Motor neuron (in vitro differentiated cells): ENCODE measurements at regions of chr13 and their contacts with region 1.

Region 1: GRCh38 chr13:33542283-33543088 is 256.9 kb upstream of the STARD13 start:
- ATAC-seq: peak; percentile 88 to 95 (median 92)
- H3K4me3 ChIP-seq: peak overlapping the region; percentile 43 to 52 (median 46)
- H3K27ac ChIP-seq: peak overlapping the region; percentile 90 to 91
- H3K4me1 ChIP-seq: peaks cover 21 to 22% of the 10 kb centered on the region in 2 donors

Region 2: GRCh38 chr13:32586080-32586900 is 956.2 kb before region 1 on chr13 and contains the start of gene PDS5B:
- in situ Hi-C with region 1: loop called in 2 of 9 experiments (anchors 25 kb)
- ATAC-seq: peak; percentile 79 to 93 (median 90)
- H3K4me3 ChIP-seq: peak within 1 kb of the TSS; percentile 69 to 82 (median 74)
- H3K27ac ChIP-seq: peak within 1 kb of the TSS; percentile 86 to 91
- H3K4me1 ChIP-seq: peaks cover 6 to 15% of the 10 kb centered on the region in 2 donors
- total RNA-seq, gene PDS5B: 30.4 to 79.0 (median 43.5) TPM

Region 3: DNA sequence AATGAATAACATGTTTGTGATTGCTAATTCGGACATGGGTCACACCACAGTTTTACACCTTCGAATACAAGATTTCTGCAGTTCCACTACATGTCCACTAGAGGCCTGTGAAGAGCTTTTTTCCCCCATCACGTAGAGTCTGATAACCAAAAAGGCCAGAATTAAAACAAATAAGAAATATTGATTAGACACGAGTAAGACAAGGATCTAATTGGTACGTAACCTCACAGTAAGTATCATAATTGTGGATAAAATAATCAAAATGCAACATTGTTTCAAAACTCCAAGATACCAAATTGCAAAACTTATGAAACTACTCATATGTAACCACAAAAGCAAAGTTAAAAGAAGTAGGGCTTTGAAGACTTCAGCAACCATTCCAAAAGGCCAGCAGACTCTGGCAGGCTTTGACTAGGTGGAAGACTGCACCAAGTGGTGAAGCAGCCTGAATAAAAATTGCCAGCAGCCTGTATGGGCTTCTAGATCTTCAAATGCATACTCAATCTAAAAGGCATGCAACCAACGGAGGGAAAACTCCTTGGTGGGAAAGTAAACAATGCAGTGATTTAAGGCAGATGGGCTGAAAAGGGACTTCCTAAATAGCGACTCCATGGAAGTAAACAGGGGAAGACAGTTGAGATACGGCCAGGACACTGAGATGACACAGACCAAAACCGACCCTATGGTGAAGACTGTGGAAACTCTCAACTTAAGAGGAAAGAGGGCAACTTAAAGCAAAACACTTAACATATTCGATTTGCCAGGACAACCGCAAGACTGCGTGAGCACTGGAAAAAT is 313.6 kb before region 1 on chr13:
- in situ Hi-C with region 1: loop called in 1 of 9 experiments (anchors 25 kb)
- ATAC-seq: peak in 5 of 8 experiments; percentile 24 to 60 (median 45)
- H3K4me3 ChIP-seq: no peak overlapping the region
- H3K27ac ChIP-seq: no peak overlapping the region
- H3K4me1 ChIP-seq: peaks cover 0 to 9% of the 10 kb centered on the region in 2 donors